Calu3 (cell line): ENCODE measurements at regions of chr15 and their contacts with region 1.

Region 1: DNA sequence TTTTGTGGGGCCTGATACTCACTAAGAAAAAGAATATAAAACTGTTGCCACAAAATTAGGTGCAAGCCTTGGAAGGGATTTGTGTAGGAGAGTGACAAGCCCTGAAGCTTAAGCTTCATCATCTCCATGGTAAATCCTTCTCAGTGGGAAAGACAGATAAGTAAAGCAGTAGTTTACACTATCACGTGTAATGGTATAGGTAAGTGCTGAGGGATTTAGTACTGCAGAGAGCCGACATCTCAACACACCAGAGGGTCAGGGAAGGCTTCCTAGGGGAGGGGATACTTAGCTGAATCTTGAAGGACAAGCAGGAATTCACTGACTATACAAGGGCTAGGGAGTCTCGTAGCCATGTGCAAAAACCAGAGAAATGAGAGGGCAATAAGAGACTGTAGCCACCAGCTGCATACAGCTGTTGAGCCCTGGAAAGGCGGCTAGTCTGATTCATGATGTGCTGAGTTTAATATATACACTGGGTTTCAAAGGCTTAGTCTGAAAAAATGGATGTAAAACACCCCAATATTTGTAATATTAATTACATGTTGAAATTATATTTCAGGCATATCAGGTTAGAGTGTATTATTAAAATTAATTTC is 11.1 kb downstream of the SLC24A1 start:
- DNase-seq: no peak
- H3K4me3 Mint-ChIP-seq: no peak overlapping the region
- H3K27ac Mint-ChIP-seq: no peak overlapping the region
- H3K4me1 Mint-ChIP-seq: no peaks in the 10 kb centered on the region
- H3K27me3 Mint-ChIP-seq: no peaks in the 10 kb centered on the region
- CTCF ChIP-seq: no peak

Region 2: GRCh38 chr15:65612949-65613744 is 19.7 kb before region 1 on chr15:
- CTCF ChIA-PET with region 1: interaction called, 5 read pairs
- intact Hi-C with region 1: loop called (anchors 1 kb)
- DNase-seq: no peak
- H3K4me3 Mint-ChIP-seq: no peak overlapping the region
- H3K27ac Mint-ChIP-seq: no peak overlapping the region
- H3K4me1 Mint-ChIP-seq: peaks cover 11% of the 10 kb centered on the region
- H3K27me3 Mint-ChIP-seq: no peaks in the 10 kb centered on the region
- CTCF ChIP-seq: no peak

Region 3: GRCh38 chr15:65836665-65837064 is 203.8 kb after region 1 on chr15:
- CTCF ChIA-PET with region 1: no interaction called
- intact Hi-C with region 1: no loop called
- DNase-seq: no peak
- H3K4me3 Mint-ChIP-seq: no peak overlapping the region
- H3K27ac Mint-ChIP-seq: no peak overlapping the region
- H3K4me1 Mint-ChIP-seq: peaks cover 30% of the 10 kb centered on the region
- H3K27me3 Mint-ChIP-seq: no peaks in the 10 kb centered on the region
- CTCF ChIP-seq: peak; percentile 34